GM10248 (cell line): ENCODE measurements at regions of chr5 and their contacts with region 1.

Region 1: DNA sequence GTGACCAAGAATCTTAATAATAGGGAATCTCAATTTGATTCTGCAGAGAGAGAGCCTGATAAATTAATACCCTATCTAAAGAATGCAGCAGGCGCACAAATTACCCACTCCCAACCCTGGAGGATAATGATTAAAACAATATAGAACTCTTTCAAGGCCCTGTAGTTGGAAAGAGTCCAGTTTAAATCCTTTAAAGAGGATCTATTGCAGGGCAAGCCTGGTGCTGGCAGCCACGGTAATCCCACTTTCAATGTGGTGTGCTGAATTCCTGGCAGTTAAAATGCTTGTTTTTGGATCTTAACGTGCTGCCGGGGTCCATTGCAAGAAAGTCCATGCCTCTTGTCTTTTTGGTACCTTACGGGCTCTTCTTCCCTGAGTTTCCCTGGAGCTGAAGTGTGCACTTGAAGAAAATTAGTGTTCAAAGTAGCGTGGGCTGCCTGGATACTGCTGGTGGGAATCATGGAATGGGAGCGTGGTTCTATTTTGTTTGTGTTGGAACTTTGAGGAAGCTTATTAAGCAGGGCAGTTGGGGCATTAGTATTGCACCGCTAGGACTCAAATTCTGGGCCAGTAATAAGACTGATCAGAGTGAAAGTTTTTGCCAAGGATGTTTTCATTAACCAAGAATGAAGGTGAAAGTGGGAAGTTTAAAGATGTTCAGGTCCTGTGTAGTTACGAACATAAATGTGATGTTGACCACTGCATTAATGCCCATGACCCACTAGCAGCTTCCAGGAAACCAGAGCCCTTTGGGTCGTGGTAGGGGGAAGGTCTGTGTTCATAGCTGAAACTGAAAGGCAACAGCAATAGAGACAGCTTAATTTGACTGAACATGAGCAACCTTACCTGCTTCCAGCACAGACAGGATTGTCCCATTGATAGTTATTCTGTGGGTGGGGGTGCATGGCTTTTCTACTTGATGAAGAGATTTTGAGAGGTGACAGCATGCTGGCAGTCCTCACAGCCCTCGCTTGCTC is 20.8 kb downstream of the MARCHF6 start:
- DNase-seq: no peak
- CTCF ChIP-seq: no peak

Region 2: DNA sequence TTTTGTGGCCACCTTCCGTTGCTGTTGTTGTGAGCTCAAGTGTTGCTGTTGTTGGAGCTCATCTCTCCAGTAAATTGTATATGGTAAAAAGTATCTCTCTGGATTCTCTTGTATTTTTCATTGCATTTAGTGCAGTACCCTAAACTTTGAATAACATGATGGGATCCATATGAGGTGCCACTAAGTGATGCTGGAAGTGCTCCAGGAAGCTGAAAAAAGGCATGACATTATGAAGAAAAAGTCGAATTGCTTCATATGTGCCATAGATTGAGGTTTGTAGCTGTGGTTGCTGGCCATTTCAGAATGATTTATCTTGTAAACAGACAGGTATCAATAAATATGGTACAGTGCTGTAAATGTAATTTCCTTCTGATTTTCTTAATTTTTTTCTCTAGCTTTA is 15.3 kb before region 1 on chr5:
- CTCF ChIA-PET with region 1: interaction called, 17 read pairs
- POLR2A ChIA-PET with region 1: no interaction called
- DNase-seq: no peak
- CTCF ChIP-seq: no peak

Region 3: GRCh38 chr5:10489810-10490426 is 115.6 kb after region 1 on chr5:
- CTCF ChIA-PET with region 1: no interaction called
- POLR2A ChIA-PET with region 1: no interaction called
- DNase-seq: peak; percentile 66
- CTCF ChIP-seq: no peak